CD4-positive, alpha-beta T cell (primary cell): ENCODE measurements at regions of chrX and their contacts with region 1.

Region 1: DNA sequence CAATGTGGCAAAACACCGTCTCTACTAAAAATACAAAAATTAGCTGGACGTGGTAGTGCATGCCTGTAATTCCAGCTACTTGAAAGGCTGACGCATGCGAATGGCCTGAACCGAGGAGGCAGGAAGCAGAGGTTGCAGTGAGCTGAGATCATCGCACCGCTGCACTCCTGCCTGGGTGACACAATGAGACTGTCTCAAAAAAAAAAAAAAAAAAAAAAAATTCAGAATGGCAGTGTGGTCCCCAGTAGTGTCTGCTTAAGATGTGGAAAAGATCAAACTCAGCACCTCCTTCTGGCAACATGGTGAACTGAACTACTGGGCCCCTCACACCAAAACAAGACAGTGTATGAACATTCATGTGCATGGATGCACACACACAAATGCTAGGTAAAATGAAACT is 32.2 kb downstream of the SMS start:
- DNase-seq: peak in 13 of 14 experiments; percentile 5 to 82 (median 39)
- ATAC-seq: peak; percentile 94
- H3K4me3 ChIP-seq: no peak overlapping the region
- H3K4me3 Mint-ChIP-seq: peak overlapping the region; percentile 83
- H3K27ac ChIP-seq: peak overlapping the region in 1 of 2 donors; percentile 83
- H3K27ac Mint-ChIP-seq: peak overlapping the region; percentile 94
- H3K4me1 ChIP-seq: peaks cover 17% of the 10 kb centered on the region
- H3K4me1 Mint-ChIP-seq: peaks cover 26% of the 10 kb centered on the region
- H3K27me3 ChIP-seq: no peaks in the 10 kb centered on the region
- H3K27me3 Mint-ChIP-seq: no peaks in the 10 kb centered on the region
- CTCF ChIP-seq: no peak

Region 2: GRCh38 chrX:21509912-21510311 is 462.8 kb before region 1 on chrX:
- CTCF ChIA-PET with region 1: no interaction called
- POLR2A ChIA-PET with region 1: no interaction called
- intact Hi-C with region 1: no loop called
- DNase-seq: no peak
- ATAC-seq: no peak
- H3K4me3 ChIP-seq: no peak overlapping the region
- H3K4me3 Mint-ChIP-seq: no peak overlapping the region
- H3K27ac ChIP-seq: no peak overlapping the region
- H3K27ac Mint-ChIP-seq: no peak overlapping the region
- H3K4me1 ChIP-seq: no peaks in the 10 kb centered on the region
- H3K4me1 Mint-ChIP-seq: no peaks in the 10 kb centered on the region
- H3K27me3 ChIP-seq: no peaks in the 10 kb centered on the region
- H3K27me3 Mint-ChIP-seq: no peaks in the 10 kb centered on the region
- CTCF ChIP-seq: no peak

Region 3: DNA sequence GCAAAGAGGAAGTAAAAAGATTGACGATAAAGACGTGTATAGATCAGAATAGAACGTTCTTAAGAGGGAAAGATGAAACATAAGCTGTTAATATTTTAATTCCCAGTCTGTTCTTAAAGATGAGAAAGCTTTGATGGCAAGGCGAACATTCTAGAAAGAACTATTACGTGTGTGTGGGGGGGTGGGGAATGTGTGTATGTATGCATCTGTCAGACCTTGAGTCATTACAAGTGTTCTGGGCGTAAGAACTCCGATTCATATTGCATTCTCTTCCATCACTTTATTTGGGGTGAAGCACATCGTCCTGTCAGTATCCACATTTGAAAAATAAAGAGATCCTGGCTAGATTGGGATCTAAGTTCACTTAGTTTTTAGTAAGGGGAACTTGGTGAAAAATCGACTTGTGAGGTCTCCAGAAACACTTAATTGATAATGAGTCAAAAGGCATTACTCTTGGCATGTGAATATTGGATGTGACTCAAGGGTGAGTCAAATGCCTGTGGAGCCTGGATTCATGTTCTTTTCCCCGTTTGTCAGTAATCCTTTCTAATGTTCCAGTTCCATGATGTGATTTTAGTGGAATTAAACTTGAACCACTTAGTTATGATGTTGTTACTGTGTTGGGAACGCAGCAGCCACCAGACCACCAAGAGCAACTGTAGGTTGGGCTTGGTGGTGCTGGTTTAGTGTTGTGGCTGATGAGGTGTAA is 29.1 kb before region 1 on chrX:
- CTCF ChIA-PET with region 1: no interaction called
- POLR2A ChIA-PET with region 1: interaction called, 5 read pairs
- intact Hi-C with region 1: loop called in 1 of 2 experiments (anchors 2 kb)
- DNase-seq: peak in 2 of 14 experiments; percentile 6 to 15
- ATAC-seq: no peak
- H3K4me3 ChIP-seq: no peak overlapping the region
- H3K4me3 Mint-ChIP-seq: peak overlapping the region; percentile 70
- H3K27ac ChIP-seq: no peak overlapping the region
- H3K27ac Mint-ChIP-seq: no peak overlapping the region
- H3K4me1 ChIP-seq: peaks cover 28% of the 10 kb centered on the region
- H3K4me1 Mint-ChIP-seq: peaks cover 45% of the 10 kb centered on the region
- H3K27me3 ChIP-seq: no peaks in the 10 kb centered on the region
- H3K27me3 Mint-ChIP-seq: no peaks in the 10 kb centered on the region
- CTCF ChIP-seq: no peak